Natural killer cell (primary cell): ENCODE measurements at regions of chr12 and their contacts with region 1.

Region 1: GRCh38 chr12:25052196-25052913 is 103.5 kb upstream of the BCAT1 start:
- DNase-seq: peak; percentile 70 to 86
- ATAC-seq: peak; percentile 61 to 87 (median 73)
- H3K4me3 ChIP-seq: peak overlapping the region; percentile 71
- H3K4me3 Mint-ChIP-seq: peak overlapping the region; percentile 91
- H3K27ac ChIP-seq: peak overlapping the region; percentile 92
- H3K27ac Mint-ChIP-seq: peak overlapping the region; percentile 95 to 98
- H3K4me1 ChIP-seq: peaks cover 17% of the 10 kb centered on the region
- H3K4me1 Mint-ChIP-seq: peaks cover 56 to 57% of the 10 kb centered on the region in 2 donors
- H3K27me3 ChIP-seq: no peaks in the 10 kb centered on the region
- H3K27me3 Mint-ChIP-seq: no peaks in the 10 kb centered on the region
- CTCF ChIP-seq: no peak

Region 2: GRCh38 chr12:24991209-24992049 is 60.9 kb before region 1 on chr12:
- intact Hi-C with region 1: loop called (anchors 5 kb)
- DNase-seq: peak in 1 of 2 donors; percentile 84
- ATAC-seq: peak; percentile 90 to 98 (median 96)
- H3K4me3 ChIP-seq: no peak overlapping the region
- H3K4me3 Mint-ChIP-seq: no peak overlapping the region
- H3K27ac ChIP-seq: no peak overlapping the region
- H3K27ac Mint-ChIP-seq: no peak overlapping the region
- H3K4me1 ChIP-seq: no peaks in the 10 kb centered on the region
- H3K4me1 Mint-ChIP-seq: no peaks in the 10 kb centered on the region
- H3K27me3 ChIP-seq: no peaks in the 10 kb centered on the region
- H3K27me3 Mint-ChIP-seq: peaks cover 7 to 13% of the 10 kb centered on the region in 2 donors
- CTCF ChIP-seq: peak; percentile 75

Region 3: GRCh38 chr12:25089738-25090137 is 37.4 kb after region 1 on chr12:
- intact Hi-C with region 1: loop called (anchors 5 kb)
- DNase-seq: no peak
- ATAC-seq: peak in 1 of 3 donors; percentile 36
- H3K4me3 ChIP-seq: no peak overlapping the region
- H3K4me3 Mint-ChIP-seq: peak overlapping the region; percentile 3
- H3K27ac ChIP-seq: no peak overlapping the region
- H3K27ac Mint-ChIP-seq: peak overlapping the region; percentile 61 to 78
- H3K4me1 ChIP-seq: no peaks in the 10 kb centered on the region
- H3K4me1 Mint-ChIP-seq: peaks cover 20 to 36% of the 10 kb centered on the region in 2 donors
- H3K27me3 ChIP-seq: no peaks in the 10 kb centered on the region
- H3K27me3 Mint-ChIP-seq: no peaks in the 10 kb centered on the region
- CTCF ChIP-seq: no peak

Region 4: DNA sequence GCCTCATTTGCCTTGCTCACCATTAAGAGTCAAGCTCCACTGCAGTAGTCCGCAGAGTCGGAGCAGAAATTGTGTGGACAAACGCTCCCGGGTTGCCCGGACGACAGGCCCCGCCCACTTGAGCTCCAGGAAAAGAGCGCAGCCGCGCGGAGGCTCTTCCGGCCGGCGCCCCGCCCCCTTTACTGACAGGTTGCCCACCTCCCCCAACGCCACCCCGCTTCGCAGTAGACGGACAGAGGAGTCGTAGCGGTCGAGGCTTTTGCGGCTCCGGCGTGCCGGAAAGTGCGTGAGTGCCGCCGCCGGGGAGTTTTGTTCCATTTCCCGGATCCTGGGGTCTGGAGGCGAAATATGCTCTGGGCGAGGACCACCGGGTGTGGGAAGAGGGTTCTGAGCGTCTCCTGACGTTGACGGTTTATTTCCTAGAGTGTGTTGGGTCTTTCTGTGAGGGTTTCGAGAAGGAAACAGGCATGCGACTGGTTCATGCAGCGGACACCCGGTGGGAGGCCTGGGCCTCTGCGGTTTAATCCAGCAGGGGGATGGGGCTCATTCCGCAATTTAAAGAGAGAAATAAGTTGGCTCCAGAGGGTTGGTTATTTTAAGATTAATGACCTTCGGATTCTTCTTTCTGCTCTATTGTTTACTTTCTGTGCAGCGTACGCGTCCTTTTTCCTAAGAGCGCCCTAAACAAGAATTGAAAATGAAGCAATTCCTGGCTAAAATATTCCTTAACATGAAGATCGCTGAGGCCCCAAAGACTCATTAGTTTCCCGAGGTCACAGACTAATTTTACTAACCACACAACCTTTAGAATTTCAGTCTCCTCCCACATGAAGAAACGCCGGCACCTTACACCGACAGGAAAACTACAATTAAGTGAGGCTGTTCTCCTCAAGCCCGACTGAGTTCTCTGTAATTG is 143.0 kb after region 1 on chr12 and contains the starts of genes DNAI7 and ETFRF1:
- intact Hi-C with region 1: loop called (anchors 2 kb)
- DNase-seq: peak; percentile 98 to 99
- ATAC-seq: peak; percentile 97 to 100 (median 98)
- H3K4me3 ChIP-seq: peak within 1 kb of the TSS; percentile 85
- H3K4me3 Mint-ChIP-seq: peak within 1 kb of the TSS; percentile 99
- H3K27ac ChIP-seq: peak within 1 kb of the TSS; percentile 95
- H3K27ac Mint-ChIP-seq: peak within 1 kb of the TSS; percentile 99
- H3K4me1 ChIP-seq: peaks cover 6% of the 10 kb centered on the region
- H3K4me1 Mint-ChIP-seq: peaks cover 21 to 31% of the 10 kb centered on the region in 2 donors
- H3K27me3 ChIP-seq: no peaks in the 10 kb centered on the region
- H3K27me3 Mint-ChIP-seq: no peaks in the 10 kb centered on the region
- CTCF ChIP-seq: no peak
- total RNA-seq, gene DNAI7: 0.15 to 0.59 (median 0.48) TPM
- total RNA-seq, gene ETFRF1: 17.5 to 42.8 (median 26.1) TPM

Region 5: DNA sequence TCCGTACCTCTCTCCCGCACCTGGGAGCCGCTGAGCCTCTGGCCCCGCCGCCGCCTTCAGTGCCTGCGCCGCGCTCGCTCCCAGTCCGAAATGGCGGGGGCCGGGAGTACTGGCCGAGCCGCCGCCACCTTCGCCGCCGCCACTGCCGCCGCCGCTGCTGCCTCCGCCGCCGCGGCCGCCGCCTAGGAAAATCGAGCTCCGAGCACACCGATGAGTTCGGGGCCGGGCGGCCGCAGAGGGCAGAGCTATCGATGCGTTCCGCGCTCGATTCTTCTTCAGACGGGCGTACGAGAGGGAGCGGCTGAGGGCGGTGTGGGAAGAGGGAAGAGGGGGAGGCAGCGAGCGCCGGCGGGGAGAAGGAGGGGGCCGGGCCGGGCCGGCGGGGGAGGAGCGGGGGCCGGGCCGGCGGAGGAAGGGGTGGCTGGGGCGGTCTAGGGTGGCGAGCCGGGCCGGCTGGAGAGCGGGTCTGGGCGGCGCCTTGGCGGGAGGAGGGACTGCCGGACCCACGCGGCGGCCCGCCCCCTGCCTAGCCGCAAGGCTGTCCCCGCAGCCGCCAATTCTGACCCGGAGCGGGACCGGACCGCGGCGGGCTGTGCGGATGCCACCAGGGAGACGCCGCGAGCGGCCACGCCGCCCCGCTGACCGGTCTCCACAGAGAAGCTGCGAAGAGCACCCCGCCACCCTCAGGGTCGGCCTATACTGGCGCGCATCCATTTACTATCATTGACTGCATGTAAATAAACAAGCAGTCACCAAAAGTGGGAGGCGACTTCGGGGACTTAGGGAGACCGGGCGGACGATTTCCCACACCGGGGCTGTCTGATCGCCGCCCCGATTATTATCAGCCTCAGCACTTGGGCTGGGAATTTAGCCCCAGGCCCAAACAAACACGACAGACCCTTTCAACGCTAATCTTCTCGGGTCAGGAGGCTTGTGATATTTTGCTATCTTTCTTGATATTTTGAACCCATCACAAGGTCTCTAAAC is 198.7 kb after region 1 on chr12 and contains the start of gene KRAS:
- intact Hi-C with region 1: loop called (anchors 5 kb)
- DNase-seq: peak; percentile 87 to 97
- ATAC-seq: peak; percentile 86 to 96 (median 87)
- H3K4me3 ChIP-seq: peak within 1 kb of the TSS; percentile 93
- H3K4me3 Mint-ChIP-seq: peak within 1 kb of the TSS; percentile 93
- H3K27ac ChIP-seq: peak within 1 kb of the TSS; percentile 80
- H3K27ac Mint-ChIP-seq: peak within 1 kb of the TSS; percentile 85 to 93
- H3K4me1 ChIP-seq: peaks cover 17% of the 10 kb centered on the region
- H3K4me1 Mint-ChIP-seq: peaks cover 21 to 38% of the 10 kb centered on the region in 2 donors
- H3K27me3 ChIP-seq: no peaks in the 10 kb centered on the region
- H3K27me3 Mint-ChIP-seq: no peaks in the 10 kb centered on the region
- CTCF ChIP-seq: no peak
- total RNA-seq, gene KRAS: 33.3 to 39.6 (median 35.7) TPM